ENCODE measurements at regions of chr9 and their contacts with region 1.

Region 1: GRCh38 chr9:92790542-92791527 is 26.2 kb upstream of the BICD2 start:
- DNase-seq: peak; percentile 86
- H3K4me3 ChIP-seq: no peak overlapping the region
- H3K27ac ChIP-seq: no peak overlapping the region
- H3K4me1 ChIP-seq: no peaks in the 10 kb centered on the region
- H3K27me3 ChIP-seq: no peaks in the 10 kb centered on the region
- CTCF ChIP-seq: peak; percentile 78

Region 2: DNA sequence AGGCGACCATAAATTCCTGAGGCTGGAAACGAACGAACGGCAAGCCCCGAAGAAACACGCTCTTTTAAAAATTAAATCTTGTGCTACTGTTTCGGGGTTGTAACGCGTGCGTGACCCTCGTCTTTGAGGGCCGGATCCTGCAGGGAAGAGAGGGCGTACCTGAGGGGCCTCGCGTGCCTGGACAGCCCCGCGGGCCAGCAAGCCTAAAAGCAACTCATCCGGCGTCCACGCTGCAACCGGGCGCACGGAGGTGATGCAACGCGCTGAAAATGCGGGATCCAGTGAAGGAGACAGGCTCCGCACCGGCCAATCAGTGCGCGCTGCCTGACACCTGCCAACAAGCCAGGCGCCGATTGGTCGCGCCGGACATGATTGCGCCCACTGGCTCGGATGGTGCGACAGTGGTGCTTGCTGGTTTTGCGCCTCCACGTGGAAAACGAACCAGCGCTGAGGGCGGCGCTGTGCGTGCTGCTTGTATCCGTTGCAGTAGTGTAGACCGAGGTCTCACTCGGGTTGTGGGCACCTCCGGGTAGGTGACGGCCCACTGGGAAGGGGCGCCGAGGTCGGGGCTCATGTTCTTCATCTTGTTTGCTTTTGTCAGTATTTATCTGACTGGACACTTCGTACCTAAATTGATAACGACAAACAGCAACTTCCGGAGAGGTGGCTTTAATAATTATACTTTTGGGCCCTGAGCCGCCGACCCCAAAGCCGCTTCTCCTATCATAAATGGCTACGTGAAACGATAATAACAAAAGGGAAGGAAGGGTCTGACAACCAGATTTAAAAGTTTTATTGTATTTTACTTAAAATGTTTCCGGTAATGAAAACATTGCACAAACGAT is 497.2 kb before region 1 on chr9 and contains the start of gene IARS1:
- intact Hi-C with region 1: no loop called
- DNase-seq: peak; percentile 99
- H3K4me3 ChIP-seq: peak within 1 kb of the TSS; percentile 82
- H3K27ac ChIP-seq: peak within 1 kb of the TSS; percentile 78
- H3K4me1 ChIP-seq: peaks cover 11% of the 10 kb centered on the region
- H3K27me3 ChIP-seq: no peaks in the 10 kb centered on the region
- CTCF ChIP-seq: peak; percentile 16
- total RNA-seq, gene IARS1: 52.4 to 109 TPM

Region 3: GRCh38 chr9:92439921-92440750 is 350.7 kb before region 1 on chr9:
- intact Hi-C with region 1: no loop called
- DNase-seq: no peak
- H3K4me3 ChIP-seq: no peak overlapping the region
- H3K27ac ChIP-seq: no peak overlapping the region
- H3K4me1 ChIP-seq: no peaks in the 10 kb centered on the region
- H3K27me3 ChIP-seq: no peaks in the 10 kb centered on the region
- CTCF ChIP-seq: no peak

Region 4: GRCh38 chr9:92716557-92716956 is 74.3 kb before region 1 on chr9:
- intact Hi-C with region 1: loop called (anchors 1 kb)
- DNase-seq: peak; percentile 80
- H3K4me3 ChIP-seq: no peak overlapping the region
- H3K27ac ChIP-seq: no peak overlapping the region
- H3K4me1 ChIP-seq: peaks cover 4% of the 10 kb centered on the region
- H3K27me3 ChIP-seq: no peaks in the 10 kb centered on the region
- CTCF ChIP-seq: peak; percentile 90

Region 5: GRCh38 chr9:92837191-92837590 is 46.4 kb after region 1 on chr9:
- intact Hi-C with region 1: no loop called
- DNase-seq: no peak
- H3K4me3 ChIP-seq: no peak overlapping the region
- H3K27ac ChIP-seq: no peak overlapping the region
- H3K4me1 ChIP-seq: no peaks in the 10 kb centered on the region
- H3K27me3 ChIP-seq: no peaks in the 10 kb centered on the region
- CTCF ChIP-seq: no peak

Region 6: DNA sequence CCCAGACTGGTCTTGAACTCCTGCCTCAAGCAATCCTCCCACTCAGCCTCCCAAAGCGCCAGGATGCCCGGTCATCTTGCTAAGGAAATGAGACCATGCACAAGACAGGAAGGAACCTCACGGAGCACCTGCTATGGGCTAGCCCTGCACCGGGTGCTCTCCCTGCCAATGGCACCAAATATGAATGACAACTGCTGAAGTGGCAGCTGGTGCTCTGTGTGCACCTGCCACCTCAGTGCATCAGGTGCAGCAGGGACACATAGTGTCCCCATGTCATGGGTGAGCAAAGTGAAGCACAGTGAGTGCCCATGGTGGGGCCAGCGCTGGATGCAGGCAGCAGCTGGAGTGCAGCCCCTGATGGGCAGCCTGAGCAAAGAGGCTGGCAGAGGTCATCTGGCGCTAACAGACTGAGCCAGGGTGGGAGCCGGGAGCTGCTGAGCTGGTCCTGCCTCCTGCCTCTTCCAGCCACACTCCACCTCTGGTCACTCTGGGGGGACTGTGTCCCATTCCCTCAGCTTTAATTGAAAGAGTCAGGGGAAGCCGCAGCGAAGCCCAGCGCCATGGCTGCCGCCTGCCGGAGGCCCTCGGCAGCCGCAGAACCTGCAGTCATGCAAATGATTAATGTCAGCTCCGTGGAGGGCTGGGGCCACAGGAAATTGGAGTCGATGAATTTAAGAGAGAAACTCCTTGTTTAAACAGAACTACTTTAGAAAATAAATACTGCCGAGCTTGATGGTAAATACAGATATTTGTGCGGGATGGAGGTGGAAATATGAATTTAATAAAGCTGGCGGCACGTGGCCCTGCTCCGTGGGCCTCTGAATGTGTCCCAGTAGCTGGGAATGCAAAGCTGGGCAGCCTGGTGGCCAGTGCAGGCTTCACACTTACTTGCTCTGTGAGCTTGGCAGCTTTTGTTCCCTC is 1118.0 kb after region 1 on chr9:
- intact Hi-C with region 1: no loop called
- DNase-seq: no peak
- H3K4me3 ChIP-seq: no peak overlapping the region
- H3K27ac ChIP-seq: no peak overlapping the region
- H3K4me1 ChIP-seq: no peaks in the 10 kb centered on the region
- H3K27me3 ChIP-seq: no peaks in the 10 kb centered on the region
- CTCF ChIP-seq: no peak